Activated B cell treated with CpG ODN at 0.5 μM for 24 hours (primary cell): ENCODE measurements at regions of chr13 and their contacts with region 1.

Region 1: GRCh38 chr13:91133941-91134802 is 213.3 kb upstream of the MIR17HG start:
- DNase-seq: no peak
- ATAC-seq: no peak
- H3K4me3 Mint-ChIP-seq: no peak overlapping the region
- H3K27ac Mint-ChIP-seq: no peak overlapping the region
- H3K4me1 Mint-ChIP-seq: no peaks in the 10 kb centered on the region
- H3K27me3 Mint-ChIP-seq: no peaks in the 10 kb centered on the region
- CTCF ChIP-seq: peak; percentile 54

Region 2: GRCh38 chr13:91247768-91248167 is 113.6 kb after region 1 on chr13:
- CTCF ChIA-PET with region 1: no interaction called
- POLR2A ChIA-PET with region 1: no interaction called
- intact Hi-C with region 1: loop called (anchors 1 kb)
- DNase-seq: no peak
- ATAC-seq: no peak
- H3K4me3 Mint-ChIP-seq: no peak overlapping the region
- H3K27ac Mint-ChIP-seq: no peak overlapping the region
- H3K4me1 Mint-ChIP-seq: no peaks in the 10 kb centered on the region
- H3K27me3 Mint-ChIP-seq: no peaks in the 10 kb centered on the region
- CTCF ChIP-seq: no peak

Region 3: DNA sequence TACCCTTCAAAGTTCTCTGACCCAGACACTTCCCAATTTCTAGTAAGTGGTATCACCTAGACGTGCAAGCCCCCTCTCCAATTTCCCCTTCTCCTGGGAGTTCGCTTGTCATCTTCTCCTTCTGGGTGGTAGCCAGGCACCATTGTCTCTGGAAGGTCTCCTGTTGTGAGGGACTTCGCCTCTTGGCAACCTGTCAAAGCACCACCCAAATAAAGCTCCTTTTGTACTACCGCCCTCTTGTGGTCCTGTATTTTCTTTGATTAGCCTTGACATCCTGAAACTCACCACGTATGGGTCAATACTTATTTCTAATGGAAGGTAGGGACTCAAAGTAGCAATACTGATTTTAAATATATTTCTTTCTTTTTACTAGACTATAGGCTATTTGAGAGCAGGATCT is 272.4 kb after region 1 on chr13:
- CTCF ChIA-PET with region 1: interaction called, 4 read pairs
- POLR2A ChIA-PET with region 1: no interaction called
- intact Hi-C with region 1: loop called (anchors 1 kb)
- DNase-seq: no peak
- ATAC-seq: peak; percentile 50
- H3K4me3 Mint-ChIP-seq: no peak overlapping the region
- H3K27ac Mint-ChIP-seq: no peak overlapping the region
- H3K4me1 Mint-ChIP-seq: peaks cover 3% of the 10 kb centered on the region
- H3K27me3 Mint-ChIP-seq: peaks cover 14% of the 10 kb centered on the region
- CTCF ChIP-seq: no peak

Region 4: GRCh38 chr13:91459485-91459884 is 325.3 kb after region 1 on chr13:
- CTCF ChIA-PET with region 1: no interaction called
- POLR2A ChIA-PET with region 1: no interaction called
- intact Hi-C with region 1: loop called (anchors 1 kb)
- DNase-seq: no peak
- ATAC-seq: no peak
- H3K4me3 Mint-ChIP-seq: no peak overlapping the region
- H3K27ac Mint-ChIP-seq: no peak overlapping the region
- H3K4me1 Mint-ChIP-seq: no peaks in the 10 kb centered on the region
- H3K27me3 Mint-ChIP-seq: peaks cover 2% of the 10 kb centered on the region
- CTCF ChIP-seq: no peak